Activated naive CD4-positive, alpha-beta T cell treated with anti-CD3 and anti-CD28 coated beads for 36 hours (primary cell): ENCODE measurements at regions of chr10 and their contacts with region 1.

Region 1: DNA sequence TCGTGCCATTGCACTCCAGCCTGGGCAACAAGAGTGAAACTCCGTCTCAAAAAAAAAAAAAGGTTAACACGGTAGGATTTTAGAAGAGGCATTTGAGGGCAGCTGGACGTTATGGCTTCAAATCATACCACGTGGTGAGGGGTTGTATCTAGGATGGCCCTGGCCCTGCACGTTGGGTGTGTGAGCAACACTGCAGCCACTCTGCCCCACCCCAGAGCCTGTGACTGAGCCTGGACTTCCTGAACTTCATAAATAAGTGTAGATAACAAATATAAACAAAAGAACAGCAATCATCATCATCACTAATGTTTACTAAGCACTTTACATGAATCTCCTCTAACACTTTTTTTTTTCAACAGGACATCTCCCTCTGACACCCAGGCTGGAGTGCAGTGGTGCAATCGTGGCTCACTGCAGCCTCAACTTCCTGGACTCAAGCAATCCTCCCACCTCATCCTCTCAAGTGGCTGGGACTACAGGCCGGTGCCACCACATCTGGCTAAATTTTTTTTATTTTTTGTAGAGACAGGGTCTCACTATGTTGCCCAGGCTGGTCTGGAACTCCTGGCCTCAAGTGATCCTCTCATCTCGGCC is 169.5 kb upstream of the FRMD4A start:
- DNase-seq: no peak
- H3K4me3 Mint-ChIP-seq: no peak overlapping the region
- H3K27ac Mint-ChIP-seq: no peak overlapping the region
- H3K4me1 Mint-ChIP-seq: peaks cover 11% of the 10 kb centered on the region
- H3K27me3 Mint-ChIP-seq: no peaks in the 10 kb centered on the region

Region 2: GRCh38 chr10:14536241-14537213 is 36.3 kb after region 1 on chr10:
- CTCF ChIA-PET with region 1: interaction called, 6 read pairs
- intact Hi-C with region 1: loop called (anchors 2 kb)
- DNase-seq: peak; percentile 70
- H3K4me3 Mint-ChIP-seq: no peak overlapping the region
- H3K27ac Mint-ChIP-seq: no peak overlapping the region
- H3K4me1 Mint-ChIP-seq: peaks cover 83% of the 10 kb centered on the region
- H3K27me3 Mint-ChIP-seq: no peaks in the 10 kb centered on the region

Region 3: GRCh38 chr10:14822879-14823755 is 322.8 kb after region 1 on chr10:
- CTCF ChIA-PET with region 1: interaction called, 17 read pairs
- intact Hi-C with region 1: loop called (anchors 1 kb)
- DNase-seq: peak; percentile 64
- H3K4me3 Mint-ChIP-seq: no peak overlapping the region
- H3K27ac Mint-ChIP-seq: no peak overlapping the region
- H3K4me1 Mint-ChIP-seq: peaks cover 3% of the 10 kb centered on the region
- H3K27me3 Mint-ChIP-seq: no peaks in the 10 kb centered on the region

Region 4: GRCh38 chr10:14954001-14954770 is 453.9 kb after region 1 on chr10 and contains the start of gene DCLRE1C:
- CTCF ChIA-PET with region 1: interaction called, 5 read pairs
- intact Hi-C with region 1: loop called (anchors 1 kb)
- DNase-seq: peak; percentile 91
- H3K4me3 Mint-ChIP-seq: peak within 1 kb of the TSS; percentile 90
- H3K27ac Mint-ChIP-seq: peak within 1 kb of the TSS; percentile 93
- H3K4me1 Mint-ChIP-seq: peaks cover 54% of the 10 kb centered on the region
- H3K27me3 Mint-ChIP-seq: no peaks in the 10 kb centered on the region
- total RNA-seq, gene DCLRE1C: 9.8 to 13.9 TPM

Region 5: GRCh38 chr10:14995964-14996565 is 495.8 kb after region 1 on chr10:
- CTCF ChIA-PET with region 1: no interaction called
- intact Hi-C with region 1: loop called (anchors 1 kb)
- DNase-seq: no peak
- H3K4me3 Mint-ChIP-seq: peak overlapping the region; percentile 13
- H3K27ac Mint-ChIP-seq: no peak overlapping the region
- H3K4me1 Mint-ChIP-seq: peaks cover 7% of the 10 kb centered on the region
- H3K27me3 Mint-ChIP-seq: peaks cover 3% of the 10 kb centered on the region